ENCODE measurements at regions of chr2 and their contacts with region 1.

Region 1: GRCh38 chr2:102010902-102011301 is 19.1 kb downstream of the IL1R2 start:
- DNase-seq: no peak
- H3K4me3 ChIP-seq: no peak overlapping the region
- H3K27ac ChIP-seq: no peak overlapping the region
- H3K4me1 ChIP-seq: peaks cover 0 to 5% (median 0%) of the 10 kb centered on the region in 4 donors
- H3K27me3 ChIP-seq: no peaks in the 10 kb centered on the region
- CTCF ChIP-seq: no peak
- EP300 ChIP-seq: no peak
- POLR2A ChIP-seq: no peak

Region 2: DNA sequence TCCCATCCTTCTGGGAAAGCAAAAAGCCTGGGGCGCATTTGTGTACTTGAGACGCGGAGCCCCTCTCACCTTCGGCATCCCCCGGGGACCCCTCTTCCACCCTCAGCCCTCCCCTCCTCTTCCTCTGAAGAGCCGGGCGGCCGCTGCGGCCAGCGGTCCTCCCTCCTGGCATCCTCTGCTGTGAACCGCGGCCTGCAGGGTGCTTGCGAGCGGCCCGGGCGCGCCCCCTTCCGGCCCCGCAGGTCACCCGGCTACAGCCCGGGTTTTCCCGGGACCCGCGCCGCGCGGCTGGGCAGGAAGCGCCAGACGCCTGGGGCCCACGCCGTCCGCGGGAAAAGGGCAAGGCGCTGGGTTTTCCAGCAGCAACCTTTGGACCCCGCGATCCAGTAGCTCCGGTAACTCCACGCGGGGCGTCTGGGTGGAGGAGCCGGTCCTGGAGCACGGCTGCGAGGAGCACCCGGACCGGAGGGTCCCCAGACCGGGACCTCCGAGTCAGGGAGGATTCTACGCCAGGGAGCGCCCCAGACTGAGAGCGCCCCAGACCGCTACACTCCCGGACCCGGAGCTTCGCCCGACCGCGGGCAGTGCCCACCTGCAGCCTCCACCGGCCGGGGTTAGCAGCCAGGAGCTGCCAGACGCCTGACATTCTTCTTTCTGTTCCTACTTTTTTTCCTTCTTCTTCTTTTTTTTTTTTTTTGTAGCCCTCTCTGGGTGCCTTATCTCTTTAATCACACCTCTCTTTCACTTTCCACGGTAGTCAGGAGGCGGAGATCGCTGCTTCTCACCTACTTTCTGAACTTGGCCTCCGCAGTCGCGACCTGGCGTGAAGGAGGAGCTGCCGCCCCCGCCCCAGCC is 344.9 kb after region 1 on chr2 and contains the start of gene IL18R1:
- in situ Hi-C with region 1: loop called in 2 of 4 experiments (anchors 10 to 25 kb)
- intact Hi-C with region 1: no loop called
- DNase-seq: peak; percentile 84
- H3K4me3 ChIP-seq: peak within 1 kb of the TSS; percentile 40 to 89 (median 72)
- H3K27ac ChIP-seq: peak within 1 kb of the TSS; percentile 64 to 82 (median 74)
- H3K4me1 ChIP-seq: peaks cover 0 to 14% (median 2%) of the 10 kb centered on the region in 4 donors
- H3K27me3 ChIP-seq: no peaks in the 10 kb centered on the region
- CTCF ChIP-seq: peak; percentile 62 to 90 (median 81)
- EP300 ChIP-seq: no peak
- POLR2A ChIP-seq: peak; percentile 28
- total RNA-seq, gene IL18R1: 0.75 to 6.0 (median 2.8) TPM

Region 3: GRCh38 chr2:102442967-102443828 is 432.3 kb after region 1 on chr2:
- in situ Hi-C with region 1: loop called in 3 of 4 experiments (anchors 10 to 25 kb)
- intact Hi-C with region 1: no loop called
- DNase-seq: peak; percentile 22
- H3K4me3 ChIP-seq: no peak overlapping the region
- H3K27ac ChIP-seq: peak overlapping the region in 1 of 4 donors; percentile 11
- H3K4me1 ChIP-seq: peaks cover 0 to 9% (median 0%) of the 10 kb centered on the region in 4 donors
- H3K27me3 ChIP-seq: no peaks in the 10 kb centered on the region
- CTCF ChIP-seq: peak; percentile 59 to 75 (median 69)
- EP300 ChIP-seq: no peak
- POLR2A ChIP-seq: no peak

Region 4: DNA sequence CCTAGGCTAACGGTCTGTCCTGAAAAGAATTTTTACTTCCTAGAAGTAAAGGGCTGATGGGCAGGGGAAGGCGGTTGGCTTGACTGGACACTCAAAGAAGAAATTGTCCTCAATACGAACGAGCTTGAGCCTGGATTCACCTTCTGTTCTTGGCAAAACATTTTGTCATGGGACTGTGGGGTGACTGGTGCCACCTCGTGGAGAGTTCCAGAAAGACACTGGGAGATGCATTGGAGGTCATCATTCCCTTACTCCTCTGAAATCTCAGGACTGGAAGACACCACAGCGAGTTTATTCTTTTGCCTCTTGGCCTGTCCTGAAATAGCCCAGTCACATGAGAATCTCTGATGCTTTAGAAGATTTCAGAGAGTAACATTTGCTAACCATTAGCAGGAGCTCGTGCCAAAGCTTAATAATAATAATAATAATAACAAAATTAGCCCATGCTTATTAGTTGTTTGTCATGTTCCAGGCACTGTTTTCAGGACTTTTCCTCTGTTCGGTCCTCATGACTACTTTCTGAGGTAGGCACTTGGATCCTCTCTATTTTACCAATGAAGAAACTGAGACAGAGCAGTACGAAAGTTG is 795.4 kb after region 1 on chr2:
- in situ Hi-C with region 1: no loop called
- intact Hi-C with region 1: no loop called
- DNase-seq: peak; percentile 69
- H3K4me3 ChIP-seq: no peak overlapping the region
- H3K27ac ChIP-seq: no peak overlapping the region
- H3K4me1 ChIP-seq: peaks cover 0 to 7% (median 0%) of the 10 kb centered on the region in 4 donors
- H3K27me3 ChIP-seq: no peaks in the 10 kb centered on the region
- CTCF ChIP-seq: peak; percentile 60 to 77 (median 71)
- EP300 ChIP-seq: no peak
- POLR2A ChIP-seq: no peak

Measured in transverse colon (tissue), 4 donors.